Activated B cell treated with CpG ODN at 0.5 μM for 24 hours (primary cell): ENCODE measurements at regions of chr7 and their contacts with region 1.

Region 1: DNA sequence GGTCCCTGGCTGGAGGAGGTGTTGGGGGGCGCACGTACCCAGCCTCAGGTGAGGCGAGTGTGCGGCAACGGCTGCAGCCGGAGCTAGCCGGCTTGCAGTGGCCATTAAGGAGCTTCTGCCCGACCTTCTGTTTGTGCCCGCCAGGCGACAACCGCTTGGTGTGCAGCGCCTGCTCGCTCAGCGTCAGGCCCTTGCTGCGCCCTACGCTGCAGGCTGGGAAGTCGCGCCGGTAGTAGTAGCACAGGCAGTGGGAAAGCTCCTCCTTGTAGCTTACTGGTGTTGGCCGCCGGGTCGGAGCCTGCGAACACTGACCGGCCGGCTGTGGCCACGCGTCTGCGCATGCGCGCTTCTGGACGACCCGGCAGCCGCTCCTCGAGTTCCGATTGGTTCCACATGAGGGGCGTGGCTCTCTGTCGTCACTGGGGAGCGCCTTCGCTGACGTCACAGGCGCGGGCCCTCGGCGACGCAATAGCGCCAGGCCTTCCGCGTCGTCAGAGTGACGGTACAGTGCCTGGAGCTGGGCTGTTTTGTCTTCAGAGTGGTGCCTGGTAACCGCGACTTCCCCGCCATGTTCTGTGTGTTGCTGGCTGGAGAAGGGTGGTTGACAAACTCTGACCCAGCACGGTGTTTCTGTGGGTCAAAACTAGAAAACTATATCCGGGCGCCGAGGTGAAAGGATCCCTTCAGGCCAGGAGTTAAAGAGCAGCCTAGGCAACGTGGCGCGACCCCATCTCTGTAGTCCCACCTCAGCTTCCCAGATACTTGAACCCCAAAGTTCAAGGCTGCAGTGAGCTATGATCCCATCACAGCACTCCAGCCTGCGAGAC is 76.3 kb upstream of the TMEM248 start:
- DNase-seq: peak; percentile 99
- ATAC-seq: peak; percentile 87
- H3K4me3 Mint-ChIP-seq: peak overlapping the region; percentile 98
- H3K27ac Mint-ChIP-seq: peak overlapping the region; percentile 99
- H3K4me1 Mint-ChIP-seq: peaks cover 29% of the 10 kb centered on the region
- H3K27me3 Mint-ChIP-seq: peaks cover 2% of the 10 kb centered on the region
- CTCF ChIP-seq: no peak

Region 2: GRCh38 chr7:65981965-65982792 is 862.6 kb before region 1 on chr7 and contains the start of gene GUSB:
- CTCF ChIA-PET with region 1: no interaction called
- POLR2A ChIA-PET with region 1: no interaction called
- intact Hi-C with region 1: loop called (anchors 2 kb)
- DNase-seq: peak; percentile 85
- ATAC-seq: peak; percentile 94
- H3K4me3 Mint-ChIP-seq: peak within 1 kb of the TSS; percentile 79
- H3K27ac Mint-ChIP-seq: peak within 1 kb of the TSS; percentile 46
- H3K4me1 Mint-ChIP-seq: peaks cover 19% of the 10 kb centered on the region
- H3K27me3 Mint-ChIP-seq: no peaks in the 10 kb centered on the region
- CTCF ChIP-seq: no peak
- total RNA-seq, gene GUSB: 33.6 and 40.8 TPM in 2 replicates

Region 3: GRCh38 chr7:66591799-66592596 is 252.8 kb before region 1 on chr7:
- CTCF ChIA-PET with region 1: no interaction called
- POLR2A ChIA-PET with region 1: interaction called, 4 read pairs
- intact Hi-C with region 1: loop called (anchors 1 kb)
- DNase-seq: peak; percentile 80
- ATAC-seq: peak; percentile 98
- H3K4me3 Mint-ChIP-seq: peak overlapping the region; percentile 98
- H3K27ac Mint-ChIP-seq: peak overlapping the region; percentile 91
- H3K4me1 Mint-ChIP-seq: peaks cover 52% of the 10 kb centered on the region
- H3K27me3 Mint-ChIP-seq: no peaks in the 10 kb centered on the region
- CTCF ChIP-seq: no peak

Region 4: GRCh38 chr7:66681491-66682349 is 163.0 kb before region 1 on chr7:
- CTCF ChIA-PET with region 1: no interaction called
- POLR2A ChIA-PET with region 1: no interaction called
- intact Hi-C with region 1: loop called (anchors 1 kb)
- DNase-seq: peak; percentile 95
- ATAC-seq: peak; percentile 93
- H3K4me3 Mint-ChIP-seq: peak overlapping the region; percentile 89
- H3K27ac Mint-ChIP-seq: peak overlapping the region; percentile 89
- H3K4me1 Mint-ChIP-seq: peaks cover 48% of the 10 kb centered on the region
- H3K27me3 Mint-ChIP-seq: no peaks in the 10 kb centered on the region
- CTCF ChIP-seq: no peak

Region 5: DNA sequence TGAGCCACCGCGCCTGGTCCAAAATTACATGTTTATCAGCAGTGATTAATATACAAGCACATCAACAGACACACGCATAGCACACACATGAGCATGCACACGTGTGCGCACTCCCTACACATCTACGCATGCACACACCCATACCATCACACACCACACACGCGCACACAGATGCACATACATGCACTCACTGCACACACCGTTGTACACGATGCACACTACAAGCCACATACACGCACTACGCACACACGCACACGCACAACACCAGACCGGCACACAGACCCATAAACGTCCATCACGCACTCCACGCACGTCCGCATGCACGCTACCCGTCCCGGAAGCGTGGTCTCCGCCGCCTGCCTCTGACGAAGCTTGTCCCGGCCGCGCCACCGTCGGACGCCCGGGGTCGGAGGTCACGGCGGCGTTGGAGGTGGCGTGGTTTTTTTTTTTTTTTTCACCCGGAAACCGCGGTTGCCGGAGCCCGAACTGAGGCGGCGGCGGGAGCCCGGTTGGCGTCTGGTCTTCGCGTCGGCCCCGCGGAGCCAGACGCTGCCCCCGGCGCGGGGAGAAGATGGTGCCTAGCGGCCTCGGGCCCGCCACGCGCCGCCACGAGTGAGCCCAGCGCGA is 76.1 kb after region 1 on chr7 and contains the start of gene TMEM248:
- CTCF ChIA-PET with region 1: interaction called, 3 read pairs
- POLR2A ChIA-PET with region 1: interaction called, 32 read pairs
- intact Hi-C with region 1: loop called (anchors 1 kb)
- DNase-seq: peak; percentile 94
- ATAC-seq: peak; percentile 90
- H3K4me3 Mint-ChIP-seq: peak within 1 kb of the TSS; percentile 99
- H3K27ac Mint-ChIP-seq: peak within 1 kb of the TSS; percentile 92
- H3K4me1 Mint-ChIP-seq: peaks cover 34% of the 10 kb centered on the region
- H3K27me3 Mint-ChIP-seq: no peaks in the 10 kb centered on the region
- CTCF ChIP-seq: no peak
- total RNA-seq, gene TMEM248: 89.2 and 95.0 TPM in 2 replicates

Region 6: DNA sequence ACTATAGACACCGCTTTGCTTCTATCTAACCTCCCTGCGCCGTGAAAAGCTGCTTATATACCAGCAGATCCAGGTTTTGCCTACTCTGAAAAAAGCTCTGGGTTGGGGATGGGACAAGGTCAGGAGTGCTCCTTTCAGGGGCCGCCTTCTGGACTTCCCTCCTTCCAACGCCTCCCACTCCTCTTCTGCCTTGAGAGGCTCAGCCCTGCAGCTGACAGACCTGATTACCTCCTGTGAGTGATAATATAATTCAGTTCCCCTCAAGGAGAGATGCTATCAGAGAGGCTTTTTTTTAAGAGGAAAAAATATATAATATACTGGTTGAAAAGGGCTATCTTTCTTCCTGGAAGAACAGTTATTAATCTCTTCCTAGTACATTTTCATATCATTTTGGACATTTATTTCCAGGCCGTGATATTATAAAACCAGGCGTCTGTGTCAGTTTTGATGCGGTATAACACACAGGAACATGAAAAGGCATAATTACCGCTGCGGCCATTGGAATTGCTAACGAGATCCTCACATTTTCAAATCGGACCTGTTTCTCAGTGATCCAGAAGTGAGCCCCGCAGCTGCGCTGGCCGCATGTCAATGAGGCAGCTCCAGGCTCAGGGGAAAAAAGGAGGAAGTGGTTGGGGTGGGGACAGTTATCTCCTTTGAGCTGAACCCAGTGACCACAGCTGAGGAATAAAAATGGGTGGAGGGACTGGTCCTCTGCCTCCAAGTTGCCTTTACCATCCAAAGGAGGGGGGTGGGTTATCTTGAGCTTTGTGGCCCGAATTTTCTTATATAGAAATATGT is 609.0 kb after region 1 on chr7:
- CTCF ChIA-PET with region 1: no interaction called
- POLR2A ChIA-PET with region 1: no interaction called
- intact Hi-C with region 1: no loop called
- DNase-seq: no peak
- ATAC-seq: no peak
- H3K4me3 Mint-ChIP-seq: no peak overlapping the region
- H3K27ac Mint-ChIP-seq: no peak overlapping the region
- H3K4me1 Mint-ChIP-seq: no peaks in the 10 kb centered on the region
- H3K27me3 Mint-ChIP-seq: no peaks in the 10 kb centered on the region
- CTCF ChIP-seq: no peak